Aorta (tissue), 5 donors: ENCODE measurements at regions of chr9 and their contacts with region 1.

Region 1: GRCh38 chr9:108903420-108904103 is 30.4 kb downstream of the ELP1 start:
- DNase-seq: no peak
- ATAC-seq: no peak
- H3K4me3 ChIP-seq: no peak overlapping the region
- H3K27ac ChIP-seq: no peak overlapping the region
- H3K4me1 ChIP-seq: no peaks in the 10 kb centered on the region
- H3K27me3 ChIP-seq: no peaks in the 10 kb centered on the region

Region 2: DNA sequence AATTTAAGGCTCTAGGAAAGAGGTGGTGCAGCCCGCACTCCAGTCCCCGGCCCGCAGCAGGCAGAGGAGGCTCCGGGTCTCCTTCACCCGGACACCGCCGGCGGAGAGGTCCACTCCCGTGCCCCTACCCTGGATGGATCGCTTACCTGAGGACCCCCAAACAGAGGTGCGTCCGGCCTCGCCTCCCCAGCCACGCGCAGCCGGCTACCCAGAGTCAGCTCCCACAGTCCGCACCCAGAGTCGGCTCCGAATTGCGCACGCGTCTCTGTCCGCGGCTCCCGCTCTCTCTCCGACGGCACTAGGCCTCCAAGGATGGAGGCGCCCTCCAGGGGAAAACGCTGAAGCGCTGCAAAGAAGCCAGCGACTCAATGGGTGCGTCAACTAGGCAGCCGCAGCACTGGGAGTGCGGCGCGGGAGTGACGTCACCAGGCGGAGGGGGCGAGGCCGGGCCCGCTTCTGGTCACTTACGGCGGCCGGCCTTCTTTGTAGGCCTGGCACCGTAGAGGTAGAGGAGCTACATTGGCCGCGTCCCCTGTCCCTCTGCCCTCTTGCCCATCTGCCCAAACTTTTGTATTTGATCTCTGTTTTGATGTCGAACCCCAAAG is 30.3 kb after region 1 on chr9 and contains the start of gene ELP1:
- intact Hi-C with region 1: no loop called
- DNase-seq: peak; percentile 96 to 98
- ATAC-seq: peak; percentile 96
- H3K4me3 ChIP-seq: peak within 1 kb of the TSS; percentile 61 to 62
- H3K27ac ChIP-seq: peak within 1 kb of the TSS in 1 of 2 donors; percentile 79
- H3K4me1 ChIP-seq: peaks cover 0 to 5% of the 10 kb centered on the region in 2 donors
- H3K27me3 ChIP-seq: no peaks in the 10 kb centered on the region
- total RNA-seq, gene ELP1: 13.9 to 19.5 TPM

Region 3: GRCh38 chr9:108963459-108964143 is 60.0 kb after region 1 on chr9:
- intact Hi-C with region 1: loop called in 1 of 2 experiments (anchors 10 kb)
- DNase-seq: no peak
- ATAC-seq: no peak
- H3K4me3 ChIP-seq: no peak overlapping the region
- H3K27ac ChIP-seq: no peak overlapping the region
- H3K4me1 ChIP-seq: peaks cover 2 to 4% of the 10 kb centered on the region in 2 donors
- H3K27me3 ChIP-seq: no peaks in the 10 kb centered on the region